Activated CD4-positive, alpha-beta T cell treated with anti-CD3 and anti-CD28 coated beads, Interleukin-2, amount 10 ng/mL, durations not matched to agents 24 days and 14 days (primary cell): ENCODE measurements at regions of chr20 and their contacts with region 1.

Region 1: DNA sequence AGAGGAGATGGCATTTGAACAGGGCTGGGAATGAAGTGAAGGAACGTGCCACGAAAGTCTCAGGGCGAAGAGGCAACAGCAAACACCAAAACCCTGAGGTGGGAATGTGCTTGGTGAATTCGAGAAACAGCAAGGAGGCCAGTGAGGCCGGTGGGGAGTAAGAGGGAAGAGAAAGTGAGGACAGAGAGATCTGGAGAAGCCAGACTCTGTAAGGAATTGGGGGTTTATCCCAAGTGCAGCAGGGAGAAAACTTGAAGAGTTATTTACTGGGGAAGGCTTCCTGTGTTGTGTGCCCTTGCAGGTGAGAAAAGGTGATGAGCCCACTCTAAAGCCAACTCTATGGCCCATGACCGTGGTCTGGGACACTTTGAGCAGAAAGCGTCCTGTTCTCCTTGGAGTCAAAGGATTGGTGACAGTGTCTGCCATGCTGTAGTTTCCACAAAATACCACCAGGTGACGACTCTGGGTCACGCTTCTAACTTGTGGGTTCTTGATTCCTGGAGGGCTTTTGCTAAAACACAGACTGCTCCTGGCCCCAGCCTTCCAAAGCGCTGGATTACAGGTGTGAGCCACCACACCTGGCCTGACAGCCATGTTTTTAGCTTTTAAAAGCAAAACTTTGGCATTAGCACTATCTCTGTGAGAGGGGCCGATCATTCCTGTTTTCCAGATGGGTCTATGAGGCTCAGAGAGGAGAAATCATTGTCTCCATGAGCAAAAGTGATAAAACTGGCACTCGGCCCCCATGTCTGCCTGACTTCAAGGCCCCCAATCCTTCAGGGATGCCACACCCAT is 18.0 kb upstream of the CSNK2A1 start:
- DNase-seq: peak; percentile 86
- H3K4me3 Mint-ChIP-seq: no peak overlapping the region
- H3K27ac Mint-ChIP-seq: no peak overlapping the region
- H3K4me1 Mint-ChIP-seq: peaks cover 3% of the 10 kb centered on the region
- H3K27me3 Mint-ChIP-seq: peaks cover 14% of the 10 kb centered on the region

Region 2: DNA sequence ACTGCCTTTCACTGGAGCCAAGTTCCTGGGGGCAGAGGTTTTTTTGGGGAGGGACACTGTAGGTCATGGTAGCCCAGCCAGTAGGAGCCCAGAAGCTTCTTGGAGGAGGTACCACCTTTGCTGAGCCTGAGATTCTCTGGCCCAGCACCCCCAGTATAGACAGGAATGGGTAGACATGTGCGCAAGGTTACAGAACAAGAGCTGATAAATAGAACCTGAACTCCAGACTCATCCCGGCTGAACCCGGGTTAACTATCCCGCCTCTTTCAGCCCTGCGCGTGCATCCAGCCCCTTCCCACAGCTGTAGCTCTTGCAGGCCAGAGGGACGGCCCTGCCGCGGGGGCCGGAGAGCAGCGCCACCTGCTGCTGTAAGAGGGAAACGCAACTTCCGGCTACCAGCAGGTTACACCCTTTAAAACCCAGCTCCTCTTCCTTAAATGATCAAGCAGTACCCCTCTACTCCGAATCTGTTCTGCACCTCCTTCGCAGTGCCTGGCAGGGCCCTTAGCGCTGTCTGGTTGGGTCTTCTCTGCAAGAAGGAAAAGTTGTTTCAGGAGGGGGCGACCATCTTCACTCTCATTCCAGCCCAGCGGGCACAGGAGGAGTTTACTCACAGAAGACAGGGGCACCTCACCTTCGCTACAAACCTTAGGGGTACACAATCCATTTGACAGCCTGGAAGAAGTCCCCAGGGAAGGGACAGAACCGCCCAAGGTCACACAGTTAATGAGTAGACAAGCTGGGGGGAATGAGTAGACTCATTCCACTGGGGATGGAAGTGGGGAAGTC is 83.9 kb after region 1 on chr20:
- intact Hi-C with region 1: loop called (anchors 1 kb)
- DNase-seq: peak; percentile 93
- H3K4me3 Mint-ChIP-seq: no peak overlapping the region
- H3K27ac Mint-ChIP-seq: no peak overlapping the region
- H3K4me1 Mint-ChIP-seq: peaks cover 11% of the 10 kb centered on the region
- H3K27me3 Mint-ChIP-seq: peaks cover 22% of the 10 kb centered on the region

Region 3: GRCh38 chr20:667391-667964 is 105.8 kb after region 1 on chr20:
- intact Hi-C with region 1: loop called (anchors 1 kb)
- DNase-seq: peak; percentile 89
- H3K4me3 Mint-ChIP-seq: no peak overlapping the region
- H3K27ac Mint-ChIP-seq: no peak overlapping the region
- H3K4me1 Mint-ChIP-seq: peaks cover 7% of the 10 kb centered on the region
- H3K27me3 Mint-ChIP-seq: peaks cover 54% of the 10 kb centered on the region

Region 4: DNA sequence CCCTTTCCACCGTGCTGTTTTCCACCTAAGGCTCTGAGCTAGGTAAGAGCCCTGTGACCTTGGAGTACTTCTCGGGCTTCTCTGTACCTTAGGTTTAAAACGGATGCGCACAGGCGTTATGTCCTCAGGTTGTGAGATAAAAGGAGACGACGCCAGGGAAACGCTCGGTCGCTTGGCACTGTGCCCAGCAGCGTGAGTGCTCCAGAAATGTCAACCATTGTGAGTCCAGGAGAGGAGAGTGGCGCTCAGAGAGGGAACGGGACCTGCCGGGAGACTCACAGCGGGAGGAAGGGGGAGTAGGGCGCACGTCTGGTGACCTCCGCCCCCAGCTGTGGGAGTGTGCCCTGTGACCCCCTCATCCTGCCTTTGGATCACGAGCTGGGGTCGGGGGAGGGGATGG is 147.8 kb after region 1 on chr20:
- intact Hi-C with region 1: no loop called
- DNase-seq: no peak
- H3K4me3 Mint-ChIP-seq: no peak overlapping the region
- H3K27ac Mint-ChIP-seq: no peak overlapping the region
- H3K4me1 Mint-ChIP-seq: no peaks in the 10 kb centered on the region
- H3K27me3 Mint-ChIP-seq: peaks cover 25% of the 10 kb centered on the region

Region 5: GRCh38 chr20:739736-740135 is 178.1 kb after region 1 on chr20:
- intact Hi-C with region 1: loop called (anchors 1 kb)
- DNase-seq: no peak
- H3K4me3 Mint-ChIP-seq: no peak overlapping the region
- H3K27ac Mint-ChIP-seq: no peak overlapping the region
- H3K4me1 Mint-ChIP-seq: no peaks in the 10 kb centered on the region
- H3K27me3 Mint-ChIP-seq: no peaks in the 10 kb centered on the region